ENCODE measurements at regions of chr20 and their contacts with region 1.

Region 1: DNA sequence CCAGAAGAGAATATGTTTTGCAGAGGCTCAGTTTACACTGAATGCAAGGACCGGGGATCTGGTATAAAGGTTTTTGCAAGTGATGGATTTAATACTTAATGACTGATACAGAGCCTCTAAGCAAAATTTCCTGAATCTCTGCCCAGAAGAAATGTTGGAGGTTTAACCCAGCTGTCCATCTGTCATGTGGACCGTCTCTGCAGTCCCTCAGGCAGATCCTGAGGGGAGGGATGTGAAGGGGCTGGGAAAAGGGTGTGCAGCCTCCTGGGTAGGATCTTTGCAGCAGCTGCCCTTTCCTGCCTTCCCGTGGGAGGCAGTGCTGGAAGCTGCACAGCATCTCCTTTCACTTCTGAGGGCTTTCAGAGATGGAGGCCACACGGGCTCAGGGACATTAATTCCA is 207.0 kb downstream of the SLC24A3 start:
- DNase-seq: no peak
- H3K4me3 ChIP-seq: no peak overlapping the region
- H3K27ac ChIP-seq: no peak overlapping the region
- H3K4me1 ChIP-seq: no peaks in the 10 kb centered on the region
- CTCF ChIP-seq: no peak

Region 2: GRCh38 chr20:19473922-19474286 is 54.5 kb after region 1 on chr20:
- CTCF ChIA-PET with region 1: no interaction called
- POLR2A ChIA-PET with region 1: no interaction called
- intact Hi-C with region 1: loop called (anchors 10 kb)
- DNase-seq: no peak
- H3K4me3 ChIP-seq: no peak overlapping the region
- H3K27ac ChIP-seq: no peak overlapping the region
- H3K4me1 ChIP-seq: no peaks in the 10 kb centered on the region
- CTCF ChIP-seq: no peak